ENCODE measurements at regions of chrX and their contacts with region 1.

Region 1: GRCh38 chrX:47311932-47312774 is 58.2 kb upstream of the ZNF157 start:
- DNase-seq: no peak
- H3K4me3 ChIP-seq: no peak overlapping the region
- H3K27ac ChIP-seq: no peak overlapping the region
- H3K4me1 ChIP-seq: no peaks in the 10 kb centered on the region
- H3K27me3 ChIP-seq: peaks cover 0 to 62% of the 10 kb centered on the region in 2 donors
- CTCF ChIP-seq: peak in 1 of 3 donors; percentile 58
- POLR2A ChIP-seq: no peak

Region 2: GRCh38 chrX:47235691-47236103 is 76.5 kb before region 1 on chrX:
- intact Hi-C with region 1: loop called (anchors 5 kb)
- DNase-seq: no peak
- H3K4me3 ChIP-seq: peak overlapping the region in 1 of 3 donors; percentile 0
- H3K27ac ChIP-seq: peak overlapping the region; percentile 44 to 96
- H3K4me1 ChIP-seq: no peaks in the 10 kb centered on the region
- H3K27me3 ChIP-seq: peaks cover 0 to 56% of the 10 kb centered on the region in 2 donors
- CTCF ChIP-seq: no peak
- POLR2A ChIP-seq: no peak

Measured in breast epithelium (tissue), 4 donors.